ENCODE measurements at regions of chr10 and their contacts with region 1.

Region 1: GRCh38 chr10:61750929-61751471 is 88.3 kb downstream of the CABCOCO1 start:
- DNase-seq: peak; percentile 81
- ATAC-seq: peak; percentile 91
- H3K4me3 Mint-ChIP-seq: no peak overlapping the region
- H3K27ac Mint-ChIP-seq: peak overlapping the region; percentile 51
- H3K4me1 Mint-ChIP-seq: peaks cover 33% of the 10 kb centered on the region
- H3K27me3 Mint-ChIP-seq: no peaks in the 10 kb centered on the region

Region 2: DNA sequence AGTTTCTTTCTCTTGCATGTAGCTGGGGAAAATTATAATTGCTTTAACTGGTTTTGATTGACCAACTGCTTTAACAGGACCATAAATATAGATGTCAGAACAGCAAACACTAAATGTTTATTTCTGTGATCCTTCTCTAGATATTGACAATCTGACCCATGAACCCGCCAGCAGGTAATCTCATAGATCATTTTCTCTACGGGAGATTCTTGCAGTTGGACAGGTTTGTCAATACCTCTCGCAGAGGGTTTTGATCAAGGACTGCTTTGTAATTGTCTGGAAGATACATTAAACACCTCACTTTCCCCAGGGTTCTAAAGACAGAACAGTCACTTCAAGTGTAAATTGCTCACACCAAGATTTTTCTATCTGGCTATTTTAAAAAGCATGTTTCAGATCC is 571.2 kb before region 1 on chr10:
- CTCF ChIA-PET with region 1: no interaction called
- POLR2A ChIA-PET with region 1: no interaction called
- intact Hi-C with region 1: no loop called
- DNase-seq: no peak
- ATAC-seq: no peak
- H3K4me3 Mint-ChIP-seq: no peak overlapping the region
- H3K27ac Mint-ChIP-seq: no peak overlapping the region
- H3K4me1 Mint-ChIP-seq: no peaks in the 10 kb centered on the region
- H3K27me3 Mint-ChIP-seq: peaks cover 3% of the 10 kb centered on the region

Region 3: DNA sequence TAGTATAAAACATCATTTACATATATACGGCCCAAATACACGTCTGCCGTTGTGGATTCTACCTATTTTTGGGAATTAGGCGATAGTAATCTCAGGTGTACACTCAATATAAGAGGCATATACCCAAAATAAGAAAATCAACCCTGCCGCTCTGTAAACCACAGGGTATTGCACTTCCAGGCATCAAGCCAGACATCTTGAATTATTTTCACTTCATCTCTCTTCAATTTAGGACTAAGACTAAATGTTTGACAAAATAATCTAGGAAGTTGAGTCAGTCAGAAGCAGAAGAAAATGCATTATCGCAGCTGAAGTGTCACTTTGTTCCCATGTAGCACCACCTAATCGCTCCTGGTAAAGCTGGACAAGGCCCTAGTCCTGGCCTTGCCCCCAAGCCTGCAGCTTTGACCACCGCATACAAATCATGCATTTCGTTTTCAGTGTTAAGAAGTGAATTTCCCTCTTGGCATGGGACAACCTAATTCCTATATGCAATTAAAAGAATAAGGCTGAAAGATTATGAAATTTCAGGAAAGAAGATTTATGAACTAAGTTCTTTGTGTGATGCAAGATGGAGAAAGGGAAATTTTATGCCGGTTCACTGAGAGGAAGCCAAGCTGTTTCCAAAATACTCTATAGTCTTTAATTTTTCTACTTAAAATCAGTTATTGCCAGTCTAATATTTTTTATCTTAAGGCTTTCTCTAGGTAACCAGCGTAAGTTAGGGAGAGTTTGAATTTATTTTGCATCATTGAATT is 62.3 kb before region 1 on chr10:
- CTCF ChIA-PET with region 1: no interaction called
- POLR2A ChIA-PET with region 1: no interaction called
- intact Hi-C with region 1: no loop called
- DNase-seq: no peak
- ATAC-seq: no peak
- H3K4me3 Mint-ChIP-seq: no peak overlapping the region
- H3K27ac Mint-ChIP-seq: no peak overlapping the region
- H3K4me1 Mint-ChIP-seq: no peaks in the 10 kb centered on the region
- H3K27me3 Mint-ChIP-seq: peaks cover 4% of the 10 kb centered on the region

Region 4: DNA sequence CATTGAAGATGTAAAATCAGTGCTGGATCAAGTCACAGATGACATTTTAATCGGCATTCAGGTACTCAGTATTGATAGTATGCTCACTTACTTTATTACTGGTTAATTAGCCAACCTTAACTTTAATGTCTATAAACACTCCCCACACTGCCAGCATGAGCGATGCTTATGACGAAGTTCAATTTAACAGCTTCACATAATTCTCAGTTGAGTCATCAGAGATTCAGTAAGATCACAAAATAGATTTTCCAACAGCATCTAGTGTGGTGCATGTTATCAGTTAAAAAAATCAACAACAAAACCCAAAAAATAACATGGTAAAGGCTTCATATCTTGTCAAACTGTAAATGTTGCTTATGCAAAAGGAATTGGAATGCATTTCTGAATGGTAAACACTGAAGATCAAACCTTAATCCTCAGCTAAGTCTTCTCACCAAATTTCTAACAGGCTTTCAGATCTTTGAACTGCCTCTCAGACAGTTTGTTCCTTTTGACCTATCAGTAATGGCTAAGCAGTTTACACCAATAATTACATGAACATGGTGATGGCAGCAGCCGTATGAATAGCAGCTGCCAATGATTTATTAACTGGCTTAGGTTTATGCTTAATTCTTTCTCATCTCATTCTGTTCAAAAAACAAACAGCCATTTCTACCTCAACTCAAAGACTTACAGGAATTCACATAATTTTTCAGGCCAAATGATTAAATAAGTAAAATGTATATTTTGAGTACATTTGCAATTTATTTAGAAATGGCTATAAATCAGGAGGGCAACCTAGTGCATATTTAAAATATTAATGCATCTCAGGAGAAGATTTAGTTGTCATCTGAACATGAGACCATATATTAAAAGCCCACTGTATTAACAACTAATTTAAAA is 10.2 kb after region 1 on chr10:
- CTCF ChIA-PET with region 1: interaction called, 15 read pairs
- POLR2A ChIA-PET with region 1: interaction called, 3 read pairs
- intact Hi-C with region 1: no loop called
- DNase-seq: no peak
- ATAC-seq: peak; percentile 77
- H3K4me3 Mint-ChIP-seq: no peak overlapping the region
- H3K27ac Mint-ChIP-seq: peak overlapping the region; percentile 2
- H3K4me1 Mint-ChIP-seq: peaks cover 36% of the 10 kb centered on the region
- H3K27me3 Mint-ChIP-seq: no peaks in the 10 kb centered on the region

Region 5: GRCh38 chr10:61835069-61835945 is 84.3 kb after region 1 on chr10:
- CTCF ChIA-PET with region 1: interaction called, 19 read pairs
- POLR2A ChIA-PET with region 1: no interaction called
- intact Hi-C with region 1: loop called (anchors 1 to 2 kb)
- DNase-seq: peak; percentile 8
- ATAC-seq: peak; percentile 26
- H3K4me3 Mint-ChIP-seq: no peak overlapping the region
- H3K27ac Mint-ChIP-seq: peak overlapping the region; percentile 15
- H3K4me1 Mint-ChIP-seq: peaks cover 24% of the 10 kb centered on the region
- H3K27me3 Mint-ChIP-seq: no peaks in the 10 kb centered on the region

Region 6: DNA sequence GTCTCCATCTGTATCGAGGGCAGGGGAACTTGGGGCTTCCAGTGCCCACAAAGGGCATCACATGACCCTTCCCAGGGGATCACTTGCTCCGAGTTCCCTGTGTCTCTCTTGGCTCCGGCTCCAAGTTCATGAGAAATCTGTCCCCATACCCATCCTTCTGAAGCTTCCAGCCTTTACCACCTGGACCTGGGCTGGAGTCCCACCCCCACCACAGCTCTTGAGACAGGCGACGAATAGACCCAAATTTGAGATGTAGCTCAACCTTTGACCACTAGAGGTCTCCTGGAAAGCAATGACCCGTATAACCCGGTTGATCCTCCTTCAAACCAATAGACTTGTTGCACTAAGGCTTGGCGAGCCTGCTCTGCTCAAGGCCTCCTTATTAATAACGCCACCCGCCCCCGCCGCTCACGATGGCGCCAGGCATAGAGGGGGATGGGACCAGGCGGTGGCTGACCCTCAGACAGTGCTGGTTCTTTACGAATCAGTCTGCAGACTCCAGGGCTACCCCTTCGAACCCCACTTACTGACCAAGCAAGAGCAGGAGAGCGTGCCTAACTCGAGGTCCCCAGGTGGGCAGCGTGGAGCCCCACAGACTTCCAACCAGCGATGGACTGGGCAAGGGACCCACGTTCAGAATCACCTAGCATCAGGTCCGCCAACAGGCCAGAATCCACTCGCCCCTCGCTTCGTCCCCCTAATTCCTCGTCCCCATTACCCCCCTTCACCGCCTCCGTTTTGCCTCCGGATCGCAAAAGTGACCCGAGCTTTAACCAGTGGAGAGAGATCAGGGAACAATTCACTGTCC is 146.1 kb after region 1 on chr10:
- CTCF ChIA-PET with region 1: interaction called, 5 read pairs
- POLR2A ChIA-PET with region 1: no interaction called
- intact Hi-C with region 1: loop called (anchors 2 to 5 kb)
- DNase-seq: peak; percentile 70
- ATAC-seq: peak; percentile 79
- H3K4me3 Mint-ChIP-seq: peak overlapping the region; percentile 94
- H3K27ac Mint-ChIP-seq: peak overlapping the region; percentile 93
- H3K4me1 Mint-ChIP-seq: peaks cover 39% of the 10 kb centered on the region
- H3K27me3 Mint-ChIP-seq: no peaks in the 10 kb centered on the region

Region 7: GRCh38 chr10:62162266-62162981 is 411.4 kb after region 1 on chr10:
- CTCF ChIA-PET with region 1: no interaction called
- POLR2A ChIA-PET with region 1: no interaction called
- intact Hi-C with region 1: loop called in 1 of 2 experiments (anchors 5 kb)
- DNase-seq: no peak
- ATAC-seq: no peak
- H3K4me3 Mint-ChIP-seq: no peak overlapping the region
- H3K27ac Mint-ChIP-seq: no peak overlapping the region
- H3K4me1 Mint-ChIP-seq: peaks cover 17% of the 10 kb centered on the region
- H3K27me3 Mint-ChIP-seq: no peaks in the 10 kb centered on the region

Region 8: GRCh38 chr10:62640411-62640810 is 889.4 kb after region 1 on chr10:
- CTCF ChIA-PET with region 1: no interaction called
- POLR2A ChIA-PET with region 1: no interaction called
- intact Hi-C with region 1: no loop called
- DNase-seq: peak; percentile 19
- ATAC-seq: no peak
- H3K4me3 Mint-ChIP-seq: no peak overlapping the region
- H3K27ac Mint-ChIP-seq: no peak overlapping the region
- H3K4me1 Mint-ChIP-seq: peaks cover 28% of the 10 kb centered on the region
- H3K27me3 Mint-ChIP-seq: no peaks in the 10 kb centered on the region

Measured in activated CD4-positive, alpha-beta T cell treated with anti-CD3 and anti-CD28 coated beads for 36 hours (primary cell).